ENCODE measurements at regions of chr15 and their contacts with region 1.

Region 1: GRCh38 chr15:98779463-98780071 is 131.2 kb downstream of the IGF1R start:
- DNase-seq: peak; percentile 60 to 73
- ATAC-seq: peak; percentile 97 to 99
- H3K4me3 ChIP-seq: peak overlapping the region in 1 of 4 donors; percentile 27
- H3K27ac ChIP-seq: no peak overlapping the region
- H3K4me1 ChIP-seq: peaks cover 8 to 11% of the 10 kb centered on the region in 2 donors
- H3K27me3 ChIP-seq: no peaks in the 10 kb centered on the region
- CTCF ChIP-seq: peak; percentile 77 to 96 (median 87)
- POLR2A ChIP-seq: no peak

Region 2: GRCh38 chr15:98850961-98851573 is 71.5 kb after region 1 on chr15:
- in situ Hi-C with region 1: no loop called
- intact Hi-C with region 1: no loop called
- DNase-seq: peak; percentile 50 to 51
- ATAC-seq: peak; percentile 35 to 40
- H3K4me3 ChIP-seq: peak overlapping the region in 2 of 4 donors; percentile 83 to 90
- H3K27ac ChIP-seq: peak overlapping the region; percentile 78 to 82 (median 80)
- H3K4me1 ChIP-seq: peaks cover 18 to 48% of the 10 kb centered on the region in 2 donors
- H3K27me3 ChIP-seq: no peaks in the 10 kb centered on the region
- CTCF ChIP-seq: peak; percentile 29 to 80 (median 68)
- POLR2A ChIP-seq: no peak

Region 3: GRCh38 chr15:98881526-98882520 is 102.3 kb after region 1 on chr15:
- in situ Hi-C with region 1: loop called in 2 of 4 experiments (anchors 25 kb)
- intact Hi-C with region 1: no loop called
- DNase-seq: peak in 1 of 2 donors; percentile 33
- ATAC-seq: peak in 1 of 2 donors; percentile 57
- H3K4me3 ChIP-seq: no peak overlapping the region
- H3K27ac ChIP-seq: no peak overlapping the region
- H3K4me1 ChIP-seq: peaks cover 9 to 25% of the 10 kb centered on the region in 2 donors
- H3K27me3 ChIP-seq: no peaks in the 10 kb centered on the region
- CTCF ChIP-seq: peak; percentile 41 to 56 (median 47)
- POLR2A ChIP-seq: no peak

Region 4: DNA sequence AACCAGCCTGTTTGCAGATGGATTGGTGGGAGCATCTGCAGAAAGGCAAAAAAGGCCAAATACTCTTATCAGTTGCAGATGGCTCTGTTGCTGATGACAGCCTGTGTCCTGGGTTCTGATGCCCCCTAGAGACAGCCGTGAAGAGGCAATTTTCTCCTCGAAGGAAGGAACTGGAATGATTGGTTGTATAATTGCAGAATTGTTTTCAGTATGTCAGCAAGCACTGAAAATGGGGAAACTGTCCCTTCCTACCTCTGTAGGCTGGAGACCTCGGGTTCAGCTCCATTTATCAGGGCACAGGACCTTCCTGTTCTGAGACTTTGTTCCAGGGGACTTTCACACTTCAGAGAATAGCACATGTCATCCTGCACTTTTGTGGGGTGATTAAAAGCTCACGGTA is 125.0 kb after region 1 on chr15:
- in situ Hi-C with region 1: loop called in 3 of 4 experiments (anchors 25 kb)
- intact Hi-C with region 1: no loop called
- DNase-seq: no peak
- ATAC-seq: no peak
- H3K4me3 ChIP-seq: no peak overlapping the region
- H3K27ac ChIP-seq: no peak overlapping the region
- H3K4me1 ChIP-seq: peaks cover 0 to 2% of the 10 kb centered on the region in 2 donors
- H3K27me3 ChIP-seq: no peaks in the 10 kb centered on the region
- CTCF ChIP-seq: peak in 3 of 5 experiments; percentile 28 to 58 (median 38)
- POLR2A ChIP-seq: no peak

Region 5: GRCh38 chr15:99068186-99068585 is 288.6 kb after region 1 on chr15:
- in situ Hi-C with region 1: loop called in 2 of 4 experiments (anchors 10 kb)
- intact Hi-C with region 1: no loop called
- DNase-seq: no peak
- ATAC-seq: no peak
- H3K4me3 ChIP-seq: no peak overlapping the region
- H3K27ac ChIP-seq: no peak overlapping the region
- H3K4me1 ChIP-seq: no peaks in the 10 kb centered on the region
- H3K27me3 ChIP-seq: no peaks in the 10 kb centered on the region
- CTCF ChIP-seq: no peak
- POLR2A ChIP-seq: no peak

Region 6: GRCh38 chr15:99085413-99086326 is 306.1 kb after region 1 on chr15:
- in situ Hi-C with region 1: loop called in 1 of 4 experiments (anchors 10 kb)
- intact Hi-C with region 1: no loop called
- DNase-seq: no peak
- ATAC-seq: peak; percentile 18 to 53
- H3K4me3 ChIP-seq: no peak overlapping the region
- H3K27ac ChIP-seq: peak overlapping the region in 3 of 4 donors; percentile 8 to 51 (median 49)
- H3K4me1 ChIP-seq: peaks cover 12 to 13% of the 10 kb centered on the region in 2 donors
- H3K27me3 ChIP-seq: no peaks in the 10 kb centered on the region
- CTCF ChIP-seq: no peak
- POLR2A ChIP-seq: no peak

Region 7: DNA sequence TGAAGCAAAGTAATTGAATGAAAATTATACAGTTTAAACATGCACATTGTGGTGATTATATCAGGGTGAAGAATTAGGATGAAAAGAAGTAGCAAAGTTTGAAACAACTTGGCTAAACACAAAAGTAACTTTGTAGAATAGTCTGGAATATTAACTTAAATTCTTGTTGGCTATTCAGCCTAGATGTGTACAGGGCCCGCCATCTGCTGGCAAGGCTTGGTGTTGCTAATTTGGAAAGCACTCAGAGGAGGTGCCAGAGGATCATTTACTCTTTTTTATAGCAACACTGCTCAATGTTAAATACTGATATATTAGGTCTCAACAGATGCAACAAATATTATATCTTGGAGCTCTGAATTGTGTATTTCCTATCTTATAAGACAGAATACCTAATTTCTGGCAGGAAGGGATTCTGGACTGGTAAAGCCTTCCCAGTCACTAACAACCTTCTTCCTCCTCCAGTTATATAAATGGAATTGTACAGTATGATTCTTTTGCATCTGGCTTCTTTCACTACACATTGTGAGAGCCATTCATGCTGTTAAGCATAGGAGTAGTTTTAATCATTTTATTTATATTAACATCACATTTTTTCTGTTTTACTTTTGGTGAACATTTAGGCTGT is 433.7 kb after region 1 on chr15:
- in situ Hi-C with region 1: loop called in 2 of 4 experiments (anchors 25 kb)
- intact Hi-C with region 1: no loop called
- DNase-seq: peak; percentile 68 to 83
- ATAC-seq: peak; percentile 57 to 80
- H3K4me3 ChIP-seq: no peak overlapping the region
- H3K27ac ChIP-seq: peak overlapping the region; percentile 54 to 81 (median 66)
- H3K4me1 ChIP-seq: peaks cover 12 to 40% of the 10 kb centered on the region in 2 donors
- H3K27me3 ChIP-seq: no peaks in the 10 kb centered on the region
- CTCF ChIP-seq: peak; percentile 87 to 96 (median 91)
- POLR2A ChIP-seq: no peak